GM10248 (cell line): ENCODE measurements at regions of chr17 and their contacts with region 1.

Region 1: DNA sequence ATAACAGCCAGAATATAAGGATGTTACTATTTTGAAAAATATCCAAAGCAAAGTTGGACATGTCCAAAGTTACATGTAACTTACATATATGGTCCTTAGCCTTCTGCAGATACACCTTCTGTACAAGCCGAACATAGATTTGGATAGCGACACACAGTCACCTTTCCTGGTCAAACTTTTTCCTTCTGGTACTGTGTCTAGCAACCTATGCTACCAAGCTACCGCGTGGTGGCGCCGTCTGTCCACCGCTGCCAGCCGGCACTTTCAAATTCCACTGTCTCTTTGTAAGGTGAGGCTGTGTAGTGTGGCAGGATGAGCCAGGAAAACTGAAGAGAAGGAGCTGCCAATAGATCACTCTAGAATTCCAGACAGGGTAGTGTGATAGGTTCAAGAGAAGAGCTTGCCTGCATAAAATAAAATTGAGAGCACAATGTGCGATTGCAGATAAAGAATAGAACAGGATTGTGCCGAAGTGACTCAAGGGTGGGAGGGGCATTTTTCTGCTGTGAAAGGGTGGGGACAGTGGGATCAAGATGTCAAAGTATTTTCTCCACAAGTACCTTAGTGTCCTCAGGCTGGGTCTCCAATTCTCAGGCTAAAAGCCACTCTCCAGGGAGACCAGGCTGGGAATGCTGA is 366.9 kb downstream of the SLC39A11 start:
- DNase-seq: peak; percentile 58
- CTCF ChIP-seq: peak; percentile 86

Region 2: DNA sequence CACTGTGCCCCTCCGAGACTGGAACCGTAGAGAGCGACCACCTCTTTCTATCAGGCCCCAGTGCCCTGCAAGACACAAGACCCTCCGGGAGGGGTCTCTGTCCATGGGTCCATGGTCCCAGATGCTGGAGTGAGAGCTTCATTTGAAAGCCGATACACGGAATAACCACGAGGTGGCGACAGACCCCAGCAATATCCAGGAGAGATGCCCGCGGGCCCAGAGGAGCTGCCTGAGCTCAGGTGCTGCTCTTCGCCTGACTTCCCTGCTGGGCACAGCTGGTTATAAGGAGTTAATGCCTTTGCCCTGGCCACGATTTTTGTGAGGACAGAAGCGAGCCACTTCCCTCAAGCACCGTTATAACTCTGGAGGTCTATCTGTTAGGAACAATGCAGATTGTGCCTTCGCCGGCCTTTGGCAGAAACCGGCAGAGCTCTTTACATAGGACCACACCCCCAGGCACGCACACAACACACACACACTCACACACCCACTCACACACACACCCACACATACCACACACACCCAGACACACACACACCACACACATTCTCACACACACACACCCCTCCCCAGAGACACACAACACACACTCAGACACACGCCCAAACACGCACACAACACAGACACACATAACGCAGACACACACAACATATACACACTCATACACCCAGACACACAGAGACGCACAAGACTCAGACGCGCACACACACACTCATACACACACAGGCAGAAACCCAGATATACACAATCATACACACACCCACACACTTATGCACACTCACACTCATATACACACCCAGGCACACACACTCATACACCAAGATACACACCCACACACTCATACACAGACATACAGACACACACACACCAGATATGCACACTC is 168.4 kb before region 1 on chr17:
- CTCF ChIA-PET with region 1: interaction called, 89 read pairs
- POLR2A ChIA-PET with region 1: no interaction called
- DNase-seq: peak; percentile 84
- CTCF ChIP-seq: peak; percentile 80

Region 3: DNA sequence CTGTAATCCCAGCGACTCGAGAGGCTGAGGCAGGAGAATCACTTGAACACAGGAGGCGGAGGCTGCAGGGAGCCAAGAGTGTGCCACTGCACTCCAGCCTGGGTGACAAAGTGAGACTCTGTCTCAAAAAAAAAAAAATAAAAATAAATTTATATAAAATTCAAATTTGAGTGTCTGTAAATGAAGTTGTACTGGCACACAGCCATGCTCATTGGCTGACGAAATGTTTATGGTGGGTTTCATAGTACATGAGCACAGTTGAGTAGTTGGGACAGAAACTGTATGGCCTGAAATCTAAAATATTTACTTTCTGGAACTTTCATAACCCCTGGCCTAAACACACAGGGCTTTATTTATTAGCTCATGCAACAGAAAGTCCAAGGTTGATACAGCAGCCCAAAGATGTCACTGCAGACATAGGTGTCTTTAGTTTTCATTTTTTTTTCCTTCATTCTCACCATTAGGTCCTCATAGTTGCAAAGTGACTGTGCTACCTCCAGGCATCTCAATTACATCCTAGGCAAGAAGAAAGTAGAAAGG is 11.7 kb after region 1 on chr17:
- CTCF ChIA-PET with region 1: interaction called, 26 read pairs
- POLR2A ChIA-PET with region 1: no interaction called
- DNase-seq: no peak
- CTCF ChIP-seq: no peak

Region 4: GRCh38 chr17:72778169-72779151 is 52.9 kb after region 1 on chr17:
- CTCF ChIA-PET with region 1: no interaction called
- POLR2A ChIA-PET with region 1: no interaction called
- DNase-seq: no peak
- CTCF ChIP-seq: no peak

Region 5: GRCh38 chr17:72985881-72986720 is 260.6 kb after region 1 on chr17:
- CTCF ChIA-PET with region 1: interaction called, 29 read pairs
- POLR2A ChIA-PET with region 1: no interaction called
- DNase-seq: peak; percentile 87
- CTCF ChIP-seq: peak; percentile 72

Region 6: DNA sequence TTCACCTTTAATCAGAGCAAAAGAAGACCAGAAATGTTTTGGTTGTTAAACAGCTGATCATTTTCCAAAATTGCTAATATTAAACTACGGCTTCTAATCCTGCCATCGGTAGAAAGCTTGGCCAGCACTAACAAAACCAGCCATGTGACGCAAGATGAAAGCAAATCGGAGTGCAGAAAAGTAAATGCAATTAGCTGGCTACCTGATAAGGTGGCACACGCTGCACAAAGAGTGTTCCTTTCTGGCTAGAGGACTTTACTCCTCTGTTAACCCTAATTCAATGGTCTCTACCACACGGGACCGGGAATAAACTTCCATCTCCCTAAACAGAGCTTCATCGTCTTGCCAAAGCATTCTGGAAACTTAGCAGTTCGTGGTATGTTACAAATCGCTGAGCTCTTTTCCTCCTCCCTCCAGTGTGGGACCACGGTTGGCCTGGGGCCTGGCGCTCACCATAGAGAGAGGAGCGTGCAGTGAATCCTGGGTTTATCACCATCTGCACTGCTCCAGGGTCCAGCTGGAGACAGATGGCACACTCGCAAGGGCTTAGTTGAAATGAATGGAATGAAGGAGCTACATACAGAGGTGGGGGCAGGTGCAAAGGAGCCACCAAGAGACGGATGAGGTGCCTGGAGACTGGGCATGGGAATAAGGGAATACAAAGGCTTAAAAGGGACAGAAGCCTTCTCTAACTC is 457.2 kb after region 1 on chr17:
- CTCF ChIA-PET with region 1: interaction called, 90 read pairs
- POLR2A ChIA-PET with region 1: no interaction called
- DNase-seq: no peak
- CTCF ChIP-seq: no peak

Region 7: DNA sequence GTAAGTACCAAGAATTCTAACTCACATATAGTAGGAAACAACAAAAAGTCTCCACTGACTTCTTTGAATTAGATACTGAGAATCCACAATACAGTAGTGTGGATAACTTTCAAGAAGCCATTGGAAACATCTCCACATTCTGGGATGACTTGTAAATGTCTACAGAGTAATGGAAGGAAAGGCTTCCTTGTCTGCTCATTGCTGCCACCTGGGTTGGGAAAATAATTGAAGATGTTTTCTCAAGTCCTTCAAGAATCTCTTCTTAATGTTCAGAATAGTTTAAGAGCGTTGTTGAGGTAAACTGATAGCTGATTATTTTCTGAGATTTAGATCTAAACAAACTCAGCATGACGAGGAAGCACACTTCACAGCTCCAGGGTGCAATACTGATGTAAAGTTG is 522.2 kb after region 1 on chr17:
- CTCF ChIA-PET with region 1: interaction called, 11 read pairs
- POLR2A ChIA-PET with region 1: no interaction called
- DNase-seq: no peak
- CTCF ChIP-seq: peak; percentile 31